ENCODE measurements at regions of chr4 and their contacts with region 1.

Region 1: DNA sequence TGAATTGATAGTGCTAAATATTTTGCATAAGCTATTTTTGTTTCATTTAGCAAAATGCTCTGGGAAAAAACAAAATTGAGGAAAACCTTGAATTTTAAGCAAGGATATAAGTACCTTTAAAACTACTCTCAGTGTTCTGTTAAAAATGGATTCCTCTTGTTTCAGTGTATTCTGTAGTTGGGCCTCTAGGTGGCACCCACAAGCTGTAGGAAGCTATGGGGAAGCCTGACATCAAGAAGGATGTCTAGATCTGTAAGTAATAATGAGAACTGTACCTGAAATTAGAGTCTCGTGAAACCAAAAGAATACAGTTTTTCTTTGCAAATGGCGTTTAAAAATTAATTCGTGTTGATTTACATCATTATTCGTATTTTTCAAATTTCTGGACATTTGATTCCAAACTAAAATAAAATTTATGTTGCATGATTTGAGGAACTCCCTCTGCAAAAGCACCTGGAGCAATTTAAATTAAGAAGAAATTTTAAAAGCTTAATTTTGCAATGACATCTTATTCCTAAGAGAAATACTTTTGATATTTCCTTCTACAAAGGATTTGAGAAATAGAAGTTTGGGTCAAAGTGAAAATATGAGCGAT is 51.2 kb downstream of the TMPRSS11E start:
- DNase-seq: peak; percentile 78
- ATAC-seq: peak; percentile 78
- H3K4me3 ChIP-seq: no peak overlapping the region
- H3K27ac ChIP-seq: no peak overlapping the region
- H3K4me1 ChIP-seq: peaks cover 21% of the 10 kb centered on the region
- H3K27me3 ChIP-seq: no peaks in the 10 kb centered on the region
- CTCF ChIP-seq: peak; percentile 88
- EP300 ChIP-seq: peak in 1 of 2 experiments; percentile 25; a peak in 1 of 4 replicates
- POLR2A ChIP-seq: no peak
- RAD21 ChIP-seq: peak; percentile 92

Region 2: GRCh38 chr4:68630373-68630772 is 131.9 kb after region 1 on chr4:
- CTCF ChIA-PET with region 1: no interaction called
- POLR2A ChIA-PET with region 1: no interaction called
- in situ Hi-C with region 1: loop called (anchors 10 kb)
- intact Hi-C with region 1: loop called (anchors 5 kb)
- DNase-seq: no peak
- ATAC-seq: no peak
- H3K4me3 ChIP-seq: no peak overlapping the region
- H3K27ac ChIP-seq: no peak overlapping the region
- H3K4me1 ChIP-seq: peaks cover 15% of the 10 kb centered on the region
- H3K27me3 ChIP-seq: no peaks in the 10 kb centered on the region
- CTCF ChIP-seq: no peak
- EP300 ChIP-seq: no peak
- POLR2A ChIP-seq: no peak
- RAD21 ChIP-seq: no peak

Region 3: GRCh38 chr4:68820770-68821169 is 322.3 kb after region 1 on chr4:
- CTCF ChIA-PET with region 1: no interaction called
- POLR2A ChIA-PET with region 1: interaction called, 3 read pairs
- in situ Hi-C with region 1: no loop called
- intact Hi-C with region 1: loop called (anchors 5 kb)
- DNase-seq: no peak
- ATAC-seq: no peak
- H3K4me3 ChIP-seq: no peak overlapping the region
- H3K27ac ChIP-seq: no peak overlapping the region
- H3K4me1 ChIP-seq: peaks cover 77% of the 10 kb centered on the region
- H3K27me3 ChIP-seq: no peaks in the 10 kb centered on the region
- CTCF ChIP-seq: no peak
- EP300 ChIP-seq: no peak
- POLR2A ChIP-seq: no peak
- RAD21 ChIP-seq: no peak

Region 4: DNA sequence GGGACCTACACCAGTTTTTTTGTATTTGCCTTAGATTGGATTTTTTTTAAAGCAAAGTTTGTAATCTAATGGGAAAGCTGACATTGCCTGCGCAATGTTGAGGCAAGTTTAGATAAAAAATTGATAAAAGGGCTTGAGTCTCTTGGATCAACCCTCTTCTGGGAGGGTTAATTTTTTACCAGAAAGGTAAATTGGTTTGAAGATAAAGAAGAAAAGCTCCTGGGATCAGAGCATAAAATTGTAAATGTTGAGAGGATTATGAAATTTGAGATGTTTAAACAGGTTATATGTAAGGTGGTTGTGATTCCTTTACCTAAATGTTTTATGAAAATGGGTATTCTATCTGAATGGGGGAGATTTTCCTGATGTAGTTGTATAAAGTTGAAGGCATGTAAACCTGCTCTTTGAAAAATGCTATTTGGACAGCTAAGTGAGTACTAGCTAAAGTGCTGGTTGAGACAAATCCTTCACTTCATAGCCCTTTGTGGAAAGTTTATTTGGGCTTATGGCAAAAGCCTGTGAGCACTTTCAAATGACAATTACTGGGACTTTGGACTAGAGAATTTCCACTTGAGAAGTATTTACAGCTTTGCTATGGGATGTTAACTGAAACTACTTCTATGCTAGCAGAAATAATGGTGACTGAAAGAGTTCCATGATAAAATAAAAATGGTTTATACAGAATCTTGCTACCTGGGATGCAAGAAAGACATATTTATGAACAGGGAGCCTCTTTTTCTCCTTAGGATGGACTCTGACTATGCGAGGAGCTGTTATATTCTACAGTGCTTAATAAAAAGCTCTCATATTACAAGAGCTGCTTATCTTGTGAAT is 373.5 kb after region 1 on chr4:
- CTCF ChIA-PET with region 1: no interaction called
- POLR2A ChIA-PET with region 1: no interaction called
- in situ Hi-C with region 1: no loop called
- intact Hi-C with region 1: loop called (anchors 2 kb)
- DNase-seq: peak; percentile 91
- ATAC-seq: peak; percentile 92
- H3K4me3 ChIP-seq: peak overlapping the region in 2 of 3 experiments; percentile 47 to 55; a peak in 3 of 6 replicates
- H3K27ac ChIP-seq: peak overlapping the region; percentile 85
- H3K4me1 ChIP-seq: peaks cover 59% of the 10 kb centered on the region
- H3K27me3 ChIP-seq: no peaks in the 10 kb centered on the region
- CTCF ChIP-seq: no peak
- EP300 ChIP-seq: peak in 1 of 2 experiments; percentile 90; a peak in 2 of 4 replicates
- POLR2A ChIP-seq: no peak; a peak in 1 of 4 replicates
- RAD21 ChIP-seq: peak; percentile 11; the same call in 1 of the 2 replicates

Region 5: DNA sequence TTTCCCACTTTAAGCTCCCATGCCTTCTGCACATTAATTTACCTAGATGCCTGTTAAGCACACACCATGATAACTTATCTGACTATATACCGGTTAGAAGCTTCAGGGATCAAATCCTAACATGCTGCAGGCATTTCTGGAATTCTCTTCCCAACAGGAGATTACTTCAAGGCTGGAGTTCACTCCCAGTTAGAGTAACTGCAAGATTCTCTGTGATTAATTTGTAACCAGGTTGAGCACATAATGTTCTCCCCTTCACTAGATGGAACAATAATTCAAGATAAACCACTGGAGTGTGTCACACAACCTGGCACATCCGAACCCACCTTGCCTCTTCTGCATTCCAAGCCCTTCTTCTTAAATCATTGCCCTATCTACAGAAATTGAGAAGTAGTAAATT is 464.9 kb after region 1 on chr4:
- CTCF ChIA-PET with region 1: no interaction called
- POLR2A ChIA-PET with region 1: no interaction called
- in situ Hi-C with region 1: no loop called
- intact Hi-C with region 1: no loop called
- DNase-seq: no peak
- ATAC-seq: no peak
- H3K4me3 ChIP-seq: no peak overlapping the region
- H3K27ac ChIP-seq: no peak overlapping the region
- H3K4me1 ChIP-seq: peaks cover 34% of the 10 kb centered on the region
- H3K27me3 ChIP-seq: no peaks in the 10 kb centered on the region
- CTCF ChIP-seq: no peak
- EP300 ChIP-seq: no peak
- POLR2A ChIP-seq: no peak
- RAD21 ChIP-seq: no peak

Region 6: DNA sequence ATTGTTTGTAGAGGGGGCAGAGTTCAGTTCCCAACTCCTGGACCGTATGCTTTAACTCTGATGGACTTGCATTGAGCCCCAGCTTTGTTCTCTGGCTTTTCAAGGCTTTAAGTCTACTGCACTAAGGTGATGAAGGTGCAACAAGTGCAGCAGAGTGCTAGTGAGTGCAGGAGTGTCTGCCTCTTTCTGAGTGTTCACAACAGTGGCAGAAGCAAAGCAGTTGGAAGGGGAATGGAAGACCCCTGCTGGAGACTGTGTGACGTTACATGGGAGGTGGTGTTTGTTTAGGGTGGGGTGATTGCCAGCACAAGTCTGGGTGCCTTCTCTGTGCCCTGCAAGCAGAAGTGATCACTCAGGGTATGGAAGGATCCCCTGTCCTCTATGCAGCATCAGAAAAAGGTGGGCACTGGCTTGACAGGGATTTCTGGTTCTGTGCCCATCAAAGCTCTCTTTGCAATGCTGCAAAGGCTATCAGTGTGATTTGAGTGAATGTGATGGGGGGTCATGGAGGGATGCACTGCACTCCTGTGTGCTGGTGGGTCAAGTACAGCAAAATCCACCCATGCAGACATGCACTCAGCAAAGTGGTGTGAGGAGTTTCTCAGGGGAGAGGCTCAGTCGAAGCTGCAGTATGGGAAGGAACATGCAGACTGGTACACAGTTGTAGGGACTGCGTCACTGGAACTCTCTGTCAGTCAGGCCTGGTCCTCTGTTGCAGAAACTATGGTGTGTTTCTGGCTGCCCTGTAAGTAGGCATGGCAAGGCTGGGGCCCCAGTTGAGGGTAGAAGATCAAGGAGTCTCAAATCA is 526.9 kb after region 1 on chr4:
- CTCF ChIA-PET with region 1: no interaction called
- POLR2A ChIA-PET with region 1: no interaction called
- in situ Hi-C with region 1: no loop called
- intact Hi-C with region 1: loop called (anchors 1 kb)
- DNase-seq: peak; percentile 68
- ATAC-seq: peak; percentile 94
- H3K4me3 ChIP-seq: no peak overlapping the region
- H3K27ac ChIP-seq: peak overlapping the region; percentile 45
- H3K4me1 ChIP-seq: peaks cover 65% of the 10 kb centered on the region
- H3K27me3 ChIP-seq: no peaks in the 10 kb centered on the region
- CTCF ChIP-seq: peak; percentile 81
- EP300 ChIP-seq: peak in 1 of 2 experiments; percentile 1; a peak in 1 of 4 replicates
- POLR2A ChIP-seq: no peak
- RAD21 ChIP-seq: peak; percentile 76

Region 7: DNA sequence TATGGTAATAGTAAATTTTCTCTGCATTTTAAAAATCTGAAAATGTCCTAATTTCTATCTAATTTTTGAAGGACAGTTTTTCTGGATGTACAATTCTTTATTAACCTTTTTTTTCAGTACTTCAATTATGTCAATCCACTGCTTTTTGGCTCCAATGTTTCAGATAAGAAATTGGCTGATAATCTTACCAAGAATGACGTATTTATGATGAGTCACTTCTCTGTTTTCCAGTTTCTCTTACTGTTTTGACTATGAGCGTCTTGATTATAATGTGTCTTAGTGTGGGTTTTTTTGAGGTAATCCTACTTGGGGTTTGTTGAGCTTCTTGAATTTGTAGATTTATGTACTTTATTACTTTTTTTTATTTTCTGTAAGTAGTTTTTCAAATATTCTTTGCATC is 668.8 kb after region 1 on chr4:
- CTCF ChIA-PET with region 1: interaction called, 4 read pairs
- POLR2A ChIA-PET with region 1: no interaction called
- in situ Hi-C with region 1: loop called (anchors 5 kb)
- intact Hi-C with region 1: loop called (anchors 1 kb)
- DNase-seq: no peak
- ATAC-seq: no peak
- H3K4me3 ChIP-seq: no peak overlapping the region
- H3K27ac ChIP-seq: no peak overlapping the region
- H3K4me1 ChIP-seq: peaks cover 41% of the 10 kb centered on the region
- H3K27me3 ChIP-seq: no peaks in the 10 kb centered on the region
- CTCF ChIP-seq: no peak
- EP300 ChIP-seq: no peak
- POLR2A ChIP-seq: no peak
- RAD21 ChIP-seq: no peak